Activated naive CD8-positive, alpha-beta T cell treated with anti-CD3 and anti-CD28 coated beads, Interleukin-2, amount 10 ng/mL, durations not matched to agents 7 days and 5 days (primary cell): ENCODE measurements at regions of chr18 and their contacts with region 1.

Region 1: GRCh38 chr18:267688-268552 is at the start of gene THOC1:
- DNase-seq: peak; percentile 95
- ATAC-seq: peak; percentile 95
- H3K4me3 Mint-ChIP-seq: peak within 1 kb of the TSS; percentile 90
- H3K27ac Mint-ChIP-seq: peak within 1 kb of the TSS; percentile 99
- H3K4me1 Mint-ChIP-seq: peaks cover 25% of the 10 kb centered on the region
- H3K27me3 Mint-ChIP-seq: no peaks in the 10 kb centered on the region
- total RNA-seq, gene THOC1: 52.1 to 54.8 TPM

Region 2: DNA sequence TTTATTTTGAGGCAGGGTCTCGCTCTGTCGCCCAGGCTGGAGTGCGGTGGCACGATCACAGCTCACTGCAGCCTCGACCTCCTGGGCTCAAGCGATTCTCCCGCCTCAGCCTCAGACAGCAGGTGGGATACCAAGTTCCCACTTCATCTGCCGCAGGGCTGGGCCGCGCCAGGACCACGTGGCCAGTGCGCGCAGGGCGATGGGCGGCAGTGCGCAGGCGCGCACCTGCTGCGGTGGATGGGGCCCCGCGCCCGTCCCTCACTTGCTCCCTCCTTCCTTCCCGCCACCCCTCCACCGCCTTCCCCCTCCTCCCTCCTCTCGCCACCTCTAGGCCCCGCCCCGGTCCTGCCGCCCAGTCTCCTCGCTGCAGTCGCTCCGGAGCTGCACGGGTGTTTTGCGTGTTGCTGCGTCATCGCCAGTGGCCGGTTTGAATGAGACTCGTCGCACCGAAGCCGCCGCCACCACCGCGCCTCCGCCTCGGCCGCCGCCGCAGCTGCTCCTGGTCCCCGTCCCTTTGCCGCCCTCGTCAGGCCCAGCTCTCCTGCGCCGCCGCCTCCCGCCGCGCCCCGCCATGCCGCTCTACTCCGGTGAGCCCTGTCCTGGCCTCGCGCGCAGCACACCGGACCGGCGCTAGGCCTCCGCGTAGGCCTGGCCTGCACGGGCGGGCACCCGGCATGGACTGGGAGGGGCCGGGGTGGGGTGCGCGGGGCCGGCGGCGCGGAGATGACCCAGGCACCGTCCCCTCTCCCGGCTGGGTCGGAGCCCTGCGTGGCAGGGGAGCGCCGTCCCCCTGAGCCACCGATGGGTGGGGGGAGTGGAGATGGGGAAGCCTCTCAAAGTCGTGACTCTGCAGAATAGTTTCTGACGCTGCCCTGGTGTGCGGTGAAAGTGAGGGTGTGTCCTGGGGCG is 109.5 kb before region 1 on chr18 and contains the start of gene USP14:
- POLR2A ChIA-PET with region 1: interaction called, 16 read pairs
- DNase-seq: peak; percentile 94
- ATAC-seq: peak; percentile 93
- H3K4me3 Mint-ChIP-seq: peak within 1 kb of the TSS; percentile 93
- H3K27ac Mint-ChIP-seq: peak within 1 kb of the TSS; percentile 95
- H3K4me1 Mint-ChIP-seq: peaks cover 19% of the 10 kb centered on the region
- H3K27me3 Mint-ChIP-seq: no peaks in the 10 kb centered on the region
- total RNA-seq, gene USP14: 53.0 to 57.0 TPM

Region 3: GRCh38 chr18:293536-293935 is 25.6 kb after region 1 on chr18:
- POLR2A ChIA-PET with region 1: no interaction called
- DNase-seq: no peak
- ATAC-seq: no peak
- H3K4me3 Mint-ChIP-seq: no peak overlapping the region
- H3K27ac Mint-ChIP-seq: no peak overlapping the region
- H3K4me1 Mint-ChIP-seq: no peaks in the 10 kb centered on the region
- H3K27me3 Mint-ChIP-seq: no peaks in the 10 kb centered on the region

Region 4: DNA sequence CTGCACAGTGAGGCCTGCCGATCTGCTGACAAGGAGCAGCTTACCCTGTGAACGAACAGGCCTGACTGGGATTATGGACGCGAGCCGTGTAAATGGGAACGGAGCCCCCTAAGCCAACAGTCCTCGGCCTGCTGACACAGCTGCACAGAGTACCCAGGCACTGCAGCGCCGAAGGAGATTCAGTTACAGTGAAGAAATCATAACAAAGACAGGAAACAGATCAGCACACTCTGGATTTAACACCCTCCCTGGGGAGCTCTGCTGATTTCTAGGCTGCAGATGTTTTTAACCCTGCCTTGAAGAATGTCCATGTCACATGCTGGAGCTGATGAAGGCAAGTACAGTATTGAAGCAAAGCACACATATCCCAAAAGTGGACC is 189.2 kb after region 1 on chr18:
- POLR2A ChIA-PET with region 1: no interaction called
- DNase-seq: no peak
- ATAC-seq: no peak
- H3K4me3 Mint-ChIP-seq: no peak overlapping the region
- H3K27ac Mint-ChIP-seq: no peak overlapping the region
- H3K4me1 Mint-ChIP-seq: no peaks in the 10 kb centered on the region
- H3K27me3 Mint-ChIP-seq: peaks cover 10% of the 10 kb centered on the region

Region 5: GRCh38 chr18:499551-500408 is 231.9 kb after region 1 on chr18:
- POLR2A ChIA-PET with region 1: no interaction called
- DNase-seq: no peak
- ATAC-seq: no peak
- H3K4me3 Mint-ChIP-seq: no peak overlapping the region
- H3K27ac Mint-ChIP-seq: no peak overlapping the region
- H3K4me1 Mint-ChIP-seq: no peaks in the 10 kb centered on the region
- H3K27me3 Mint-ChIP-seq: peaks cover 68% of the 10 kb centered on the region